Right ventricle myocardium superior (tissue), 1 donor: ENCODE measurements at regions of chr17 and their contacts with region 1.

Region 1: GRCh38 chr17:19447085-19447583 is 36.1 kb downstream of the RNF112 start:
- DNase-seq: no peak
- ATAC-seq: peak; percentile 89

Region 2: DNA sequence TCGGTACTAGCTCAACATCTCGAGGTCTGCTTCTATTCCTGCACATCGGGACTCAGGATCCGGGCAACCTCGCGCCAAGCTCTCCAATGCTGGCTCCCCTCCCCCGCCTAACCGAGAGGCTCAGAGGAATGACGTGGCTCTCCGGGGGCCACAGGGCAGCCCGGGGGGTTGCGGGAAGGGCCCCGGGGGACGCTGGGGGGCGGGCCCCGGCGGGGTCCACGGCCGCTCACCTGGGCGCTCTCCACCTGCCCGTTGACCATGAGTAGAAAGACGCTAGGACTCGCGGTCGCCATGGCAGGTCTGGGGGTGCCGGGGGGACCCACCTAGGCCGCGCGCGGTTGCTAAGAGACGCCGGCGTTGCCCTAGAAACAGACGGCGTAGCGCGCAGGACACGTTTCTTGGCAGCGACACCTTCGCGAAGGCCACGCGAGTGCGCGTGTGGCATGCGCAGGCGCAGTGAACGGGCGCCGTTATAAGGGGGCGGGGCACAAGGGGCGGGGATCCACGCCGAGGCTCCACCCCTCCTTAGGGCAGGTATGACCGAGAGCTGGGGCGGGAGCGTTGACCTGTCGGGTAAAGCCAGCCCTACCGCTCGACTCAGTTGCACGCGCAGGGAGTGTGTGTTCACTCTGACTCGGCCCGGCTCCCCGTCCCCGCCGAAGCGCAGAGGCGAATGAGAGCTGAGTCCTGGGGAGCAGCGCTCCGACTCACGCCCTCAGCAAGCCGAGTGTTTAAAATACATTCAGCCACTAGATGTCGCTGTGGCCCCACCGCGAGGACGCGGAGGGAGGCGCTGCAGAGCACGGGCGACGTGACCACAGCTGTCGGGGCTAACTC is 84.6 kb before region 1 on chr17 and contains the start of gene B9D1:
- intact Hi-C with region 1: loop called (anchors 2 kb)
- DNase-seq: peak; percentile 95
- ATAC-seq: peak; percentile 98
- total RNA-seq, gene B9D1: 6.8 TPM